ENCODE measurements at regions of chr6 and their contacts with region 1.

Region 1: DNA sequence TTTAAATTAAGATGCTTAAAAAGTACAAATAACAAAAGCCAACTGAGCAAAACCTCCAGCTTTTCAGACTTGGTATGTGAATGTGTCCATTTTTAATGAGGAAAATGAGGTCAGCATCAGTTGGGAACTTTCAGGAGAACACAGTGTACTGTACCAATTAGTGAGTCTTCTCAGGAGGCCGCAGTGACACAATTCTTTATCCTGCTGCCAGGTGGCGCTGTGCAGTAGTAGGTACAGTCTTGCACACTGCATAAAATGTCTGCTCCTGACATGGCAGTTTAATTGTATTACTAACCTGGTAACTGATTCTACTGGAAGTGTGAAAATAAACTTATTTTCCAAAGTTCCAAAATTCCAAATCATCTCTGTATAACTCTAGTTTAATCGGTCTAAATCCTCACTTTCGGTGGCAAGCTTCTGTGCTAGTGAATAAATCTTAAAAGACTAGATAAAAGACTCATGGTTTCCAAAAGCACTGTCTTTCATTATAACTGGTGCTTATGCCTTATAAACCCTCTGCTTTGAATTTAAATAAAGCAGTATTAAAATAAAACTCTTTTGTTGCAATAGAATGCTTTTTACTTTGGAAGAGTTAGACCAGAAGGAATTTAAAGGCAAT is 214.8 kb upstream of the MMS22L start:
- DNase-seq: peak; percentile 54 to 89 (median 72)
- H3K4me3 ChIP-seq: no peak overlapping the region
- H3K27ac ChIP-seq: no peak overlapping the region
- H3K4me1 ChIP-seq: no peaks in the 10 kb centered on the region
- H3K27me3 ChIP-seq: no peaks in the 10 kb centered on the region
- CTCF ChIP-seq: peak; percentile 61 to 82 (median 72)
- POLR2A ChIP-seq: no peak

Region 2: DNA sequence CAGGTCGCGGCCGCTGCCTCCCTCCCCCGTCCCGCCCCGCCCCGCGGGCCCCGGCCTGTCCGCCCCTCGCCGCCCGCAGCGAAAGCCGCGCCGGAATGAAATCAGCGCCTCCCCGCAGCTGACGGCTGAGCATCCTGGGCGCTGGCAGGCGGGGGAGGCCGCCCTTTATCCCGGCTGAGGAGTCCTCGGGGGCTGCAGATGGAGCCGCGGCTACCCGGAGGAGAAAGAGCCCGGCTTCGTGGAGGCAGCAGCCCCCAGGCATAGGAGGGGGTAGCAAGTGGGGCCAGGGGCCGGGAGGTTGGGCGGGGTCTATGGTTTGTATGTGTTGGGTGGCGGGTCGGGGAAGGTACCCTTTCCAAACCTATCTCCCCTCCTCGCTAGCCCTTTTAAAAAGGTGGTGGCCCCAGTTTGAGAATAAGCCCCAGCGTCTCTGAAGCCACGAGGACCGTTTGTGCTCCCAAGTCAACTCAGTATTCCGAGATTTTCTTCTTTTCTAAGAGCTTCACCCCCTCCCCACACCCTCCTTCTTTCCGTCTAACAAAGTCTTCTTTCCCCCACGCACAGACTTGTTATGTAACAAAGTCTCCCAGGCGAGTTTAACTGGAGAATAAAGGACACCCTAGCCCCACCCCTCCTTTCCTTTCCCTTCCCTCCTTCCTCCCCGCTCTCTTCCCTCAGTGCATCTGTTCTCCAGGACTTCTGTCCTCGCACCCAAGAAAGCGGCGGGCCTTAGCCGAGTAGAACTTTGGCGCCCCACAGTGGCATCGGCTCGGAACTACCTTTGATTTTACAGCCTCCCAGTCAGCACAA is 1347.6 kb after region 1 on chr6:
- intact Hi-C with region 1: loop called in 1 of 2 experiments (anchors 10 kb)
- DNase-seq: peak; percentile 59 to 90 (median 80)
- H3K4me3 ChIP-seq: peak overlapping the region in 1 of 4 donors; percentile 36
- H3K27ac ChIP-seq: no peak overlapping the region
- H3K4me1 ChIP-seq: peaks cover 4 to 25% of the 10 kb centered on the region in 2 donors
- H3K27me3 ChIP-seq: peaks cover 75% of the 10 kb centered on the region
- CTCF ChIP-seq: peak; percentile 73 to 91 (median 88)
- POLR2A ChIP-seq: no peak

Region 3: DNA sequence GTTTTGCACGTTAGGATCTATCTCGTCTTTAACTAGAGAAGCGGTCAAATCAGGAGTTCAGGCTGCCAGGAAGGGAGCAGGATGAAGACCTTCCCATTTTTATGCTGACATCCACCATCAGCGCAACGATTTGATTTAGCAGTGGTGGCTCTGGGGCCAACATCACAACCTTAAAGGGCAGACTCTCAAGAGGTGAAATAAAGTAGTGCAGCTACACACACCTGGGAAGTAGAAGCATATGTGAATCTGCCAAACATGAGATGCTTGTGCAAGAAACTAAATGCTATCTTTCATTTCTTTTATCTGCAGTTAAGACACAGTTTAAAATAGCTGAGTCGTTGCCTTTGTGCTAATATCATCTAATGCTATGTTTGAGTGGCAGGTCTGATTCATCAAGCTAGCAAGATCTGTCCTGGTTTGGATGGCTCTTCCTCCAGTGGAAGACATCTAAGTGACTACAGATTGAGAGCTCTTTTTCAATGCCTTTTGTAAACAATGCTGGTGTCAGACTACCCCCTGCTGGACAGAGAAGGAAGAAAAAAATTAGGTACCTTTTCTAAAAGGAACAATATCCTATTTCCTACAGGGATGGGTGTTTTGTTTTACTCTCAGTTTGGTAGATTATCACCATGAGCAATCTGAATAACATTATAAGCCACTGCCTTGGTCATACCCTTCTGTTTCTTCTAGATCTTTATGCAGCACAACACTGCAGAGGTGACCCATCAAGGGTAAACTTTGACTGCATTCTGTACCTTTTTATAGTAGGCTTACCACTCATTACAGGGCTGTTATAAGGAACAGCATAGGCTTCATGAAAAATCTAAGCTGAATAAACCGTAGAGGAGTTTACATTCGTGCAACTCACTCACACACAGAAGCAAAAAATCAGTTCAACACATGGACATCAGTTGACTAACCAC is 1621.5 kb after region 1 on chr6:
- intact Hi-C with region 1: loop called in 1 of 2 experiments (anchors 10 kb)
- DNase-seq: peak in 5 of 7 donors; percentile 9 to 46 (median 33)
- H3K4me3 ChIP-seq: no peak overlapping the region
- H3K27ac ChIP-seq: no peak overlapping the region
- H3K4me1 ChIP-seq: no peaks in the 10 kb centered on the region
- H3K27me3 ChIP-seq: no peaks in the 10 kb centered on the region
- CTCF ChIP-seq: peak; percentile 64 to 79 (median 72)
- POLR2A ChIP-seq: no peak